ENCODE measurements at regions of chrX and their contacts with region 1.

Region 1: GRCh38 chrX:41664307-41665299 is 24.2 kb upstream of the GPR34 start:
- DNase-seq: no peak
- H3K4me3 Mint-ChIP-seq: peak overlapping the region; percentile 7
- H3K27ac Mint-ChIP-seq: peak overlapping the region; percentile 88
- H3K4me1 Mint-ChIP-seq: peaks cover 46% of the 10 kb centered on the region
- H3K27me3 Mint-ChIP-seq: no peaks in the 10 kb centered on the region

Region 2: DNA sequence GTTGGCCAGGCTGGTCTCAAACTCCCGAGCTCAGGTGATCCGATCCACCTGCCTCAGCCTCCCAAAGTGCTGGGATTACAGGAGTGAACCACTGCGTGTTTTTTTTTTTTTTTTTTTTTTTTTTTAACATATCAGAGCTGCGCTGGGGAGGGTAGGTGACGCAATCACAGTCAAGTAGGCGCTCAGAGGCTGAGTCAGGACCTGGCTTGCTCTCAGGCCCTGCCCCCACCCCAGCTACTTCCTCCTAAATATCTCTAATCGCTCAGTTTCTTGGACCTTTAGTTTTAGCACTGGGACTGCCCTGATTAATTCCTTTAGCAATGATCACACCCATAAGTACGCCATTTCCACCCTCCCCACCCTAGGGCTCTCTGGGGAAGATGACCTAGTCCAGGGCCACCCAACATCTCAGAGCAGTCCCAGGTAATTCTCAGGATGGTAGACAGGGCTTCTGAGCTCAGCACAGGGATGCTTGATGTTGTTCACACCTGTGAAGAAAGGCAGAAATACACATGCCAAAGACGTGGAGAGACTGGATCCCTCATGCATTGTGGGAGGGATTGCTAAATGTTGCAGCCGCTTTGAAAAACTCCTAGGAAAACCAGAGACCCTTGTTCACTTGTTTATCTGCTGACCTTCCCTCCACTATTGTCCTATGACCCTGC is 280.4 kb before region 1 on chrX:
- intact Hi-C with region 1: loop called (anchors 5 kb)
- DNase-seq: peak; percentile 22
- H3K4me3 Mint-ChIP-seq: peak overlapping the region; percentile 47
- H3K27ac Mint-ChIP-seq: peak overlapping the region; percentile 97
- H3K4me1 Mint-ChIP-seq: peaks cover 16% of the 10 kb centered on the region
- H3K27me3 Mint-ChIP-seq: no peaks in the 10 kb centered on the region

Region 3: GRCh38 chrX:41512394-41512793 is 152.2 kb before region 1 on chrX:
- intact Hi-C with region 1: loop called (anchors 5 kb)
- DNase-seq: peak; percentile 32
- H3K4me3 Mint-ChIP-seq: peak overlapping the region; percentile 16
- H3K27ac Mint-ChIP-seq: peak overlapping the region; percentile 88
- H3K4me1 Mint-ChIP-seq: peaks cover 40% of the 10 kb centered on the region
- H3K27me3 Mint-ChIP-seq: no peaks in the 10 kb centered on the region

Region 4: GRCh38 chrX:41596596-41596995 is 68.0 kb before region 1 on chrX:
- intact Hi-C with region 1: loop called (anchors 2 kb)
- DNase-seq: no peak
- H3K4me3 Mint-ChIP-seq: no peak overlapping the region
- H3K27ac Mint-ChIP-seq: no peak overlapping the region
- H3K4me1 Mint-ChIP-seq: peaks cover 9% of the 10 kb centered on the region
- H3K27me3 Mint-ChIP-seq: no peaks in the 10 kb centered on the region

Region 5: GRCh38 chrX:41705680-41706374 is 41.2 kb after region 1 on chrX:
- intact Hi-C with region 1: loop called (anchors 5 kb)
- DNase-seq: no peak
- H3K4me3 Mint-ChIP-seq: no peak overlapping the region
- H3K27ac Mint-ChIP-seq: peak overlapping the region; percentile 64
- H3K4me1 Mint-ChIP-seq: peaks cover 35% of the 10 kb centered on the region
- H3K27me3 Mint-ChIP-seq: no peaks in the 10 kb centered on the region

Region 6: GRCh38 chrX:41734530-41734929 is 69.9 kb after region 1 on chrX:
- intact Hi-C with region 1: loop called (anchors 1 kb)
- DNase-seq: no peak
- H3K4me3 Mint-ChIP-seq: peak overlapping the region; percentile 52
- H3K27ac Mint-ChIP-seq: peak overlapping the region; percentile 77
- H3K4me1 Mint-ChIP-seq: peaks cover 31% of the 10 kb centered on the region
- H3K27me3 Mint-ChIP-seq: no peaks in the 10 kb centered on the region